ENCODE measurements at regions of chr1 and their contacts with region 1.

Region 1: GRCh38 chr1:17125756-17126237 is 6.5 kb upstream of the PADI2 start:
- H3K4me3 ChIP-seq: no peak overlapping the region
- H3K27ac ChIP-seq: no peak overlapping the region
- H3K4me1 ChIP-seq: peaks cover 17% of the 10 kb centered on the region
- CTCF ChIP-seq: peak; percentile 94

Region 2: GRCh38 chr1:16957731-16958130 is 168.1 kb before region 1 on chr1:
- CTCF ChIA-PET with region 1: no interaction called
- POLR2A ChIA-PET with region 1: no interaction called
- H3K4me3 ChIP-seq: no peak overlapping the region
- H3K27ac ChIP-seq: no peak overlapping the region
- H3K4me1 ChIP-seq: peaks cover 3% of the 10 kb centered on the region; the same call in 1 of the 2 replicates
- CTCF ChIP-seq: no peak

Region 3: GRCh38 chr1:17136936-17137335 is 11.1 kb after region 1 on chr1:
- CTCF ChIA-PET with region 1: interaction called, 10 read pairs
- POLR2A ChIA-PET with region 1: no interaction called
- H3K4me3 ChIP-seq: no peak overlapping the region
- H3K27ac ChIP-seq: no peak overlapping the region
- H3K4me1 ChIP-seq: no peaks in the 10 kb centered on the region
- CTCF ChIP-seq: no peak

Region 4: DNA sequence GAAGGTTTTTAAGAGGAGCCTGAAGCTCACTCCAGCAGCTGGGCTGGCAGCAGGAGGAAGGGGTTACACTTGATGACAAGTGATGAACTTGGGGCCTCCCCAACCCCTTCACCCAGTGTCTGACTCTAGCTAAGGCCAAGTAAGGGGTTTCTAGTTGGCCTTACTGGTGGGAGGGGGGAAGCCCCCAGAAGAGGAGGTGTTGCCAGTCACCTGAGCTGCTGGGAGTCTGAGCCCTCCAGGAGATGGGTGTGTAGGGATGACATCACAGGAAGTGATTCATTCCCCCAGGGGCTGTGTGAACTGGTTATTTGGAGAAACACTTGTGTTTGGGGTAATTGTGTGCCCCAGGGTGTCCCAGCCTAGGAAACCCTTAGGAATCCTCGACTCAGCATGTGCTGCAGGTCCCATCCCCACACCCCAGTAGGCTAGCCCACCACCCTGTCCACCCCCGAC is 82.2 kb after region 1 on chr1:
- CTCF ChIA-PET with region 1: interaction called, 17 read pairs
- POLR2A ChIA-PET with region 1: interaction called, 4 read pairs
- H3K4me3 ChIP-seq: no peak overlapping the region
- H3K27ac ChIP-seq: no peak overlapping the region
- H3K4me1 ChIP-seq: peaks cover 4% of the 10 kb centered on the region
- CTCF ChIP-seq: no peak

Region 5: GRCh38 chr1:17274186-17275170 is 148.7 kb after region 1 on chr1:
- CTCF ChIA-PET with region 1: interaction called, 29 read pairs
- POLR2A ChIA-PET with region 1: interaction called, 3 read pairs
- H3K4me3 ChIP-seq: no peak overlapping the region
- H3K27ac ChIP-seq: no peak overlapping the region
- H3K4me1 ChIP-seq: no peaks in the 10 kb centered on the region
- CTCF ChIP-seq: peak; percentile 75

Measured in HEK293 (cell line).